CD4-positive, alpha-beta T cell (primary cell): ENCODE measurements at regions of chr3 and their contacts with region 1.

Region 1: GRCh38 chr3:18988614-18989229 is 159.6 kb upstream of the KCNH8 start:
- DNase-seq: peak in 3 of 14 experiments; percentile 35 to 63 (median 60)
- ATAC-seq: peak; percentile 67
- H3K4me3 ChIP-seq: no peak overlapping the region
- H3K4me3 Mint-ChIP-seq: peak overlapping the region; percentile 76
- H3K27ac ChIP-seq: no peak overlapping the region
- H3K27ac Mint-ChIP-seq: peak overlapping the region; percentile 77
- H3K4me1 ChIP-seq: no peaks in the 10 kb centered on the region
- H3K4me1 Mint-ChIP-seq: peaks cover 27% of the 10 kb centered on the region
- H3K27me3 ChIP-seq: peaks cover 3 to 21% of the 10 kb centered on the region in 2 experiments
- H3K27me3 Mint-ChIP-seq: peaks cover 23% of the 10 kb centered on the region
- CTCF ChIP-seq: peak; percentile 84

Region 2: GRCh38 chr3:17431004-17431403 is 1557.7 kb before region 1 on chr3:
- CTCF ChIA-PET with region 1: no interaction called
- POLR2A ChIA-PET with region 1: no interaction called
- intact Hi-C with region 1: loop called in 1 of 2 experiments (anchors 5 kb)
- DNase-seq: peak in 2 of 14 experiments; percentile 11 to 12
- ATAC-seq: no peak
- H3K4me3 ChIP-seq: no peak overlapping the region
- H3K4me3 Mint-ChIP-seq: no peak overlapping the region
- H3K27ac ChIP-seq: no peak overlapping the region
- H3K27ac Mint-ChIP-seq: no peak overlapping the region
- H3K4me1 ChIP-seq: no peaks in the 10 kb centered on the region
- H3K4me1 Mint-ChIP-seq: no peaks in the 10 kb centered on the region
- H3K27me3 ChIP-seq: no peaks in the 10 kb centered on the region
- H3K27me3 Mint-ChIP-seq: no peaks in the 10 kb centered on the region
- CTCF ChIP-seq: peak; percentile 21

Region 3: GRCh38 chr3:17841190-17841828 is 1147.4 kb before region 1 on chr3:
- CTCF ChIA-PET with region 1: interaction called, 4 read pairs
- POLR2A ChIA-PET with region 1: interaction called, 3 read pairs
- intact Hi-C with region 1: loop called in 1 of 2 experiments (anchors 5 kb)
- DNase-seq: peak; percentile 48 to 79 (median 65)
- ATAC-seq: peak; percentile 74
- H3K4me3 ChIP-seq: no peak overlapping the region
- H3K4me3 Mint-ChIP-seq: no peak overlapping the region
- H3K27ac ChIP-seq: no peak overlapping the region
- H3K27ac Mint-ChIP-seq: no peak overlapping the region
- H3K4me1 ChIP-seq: peaks cover 3% of the 10 kb centered on the region
- H3K4me1 Mint-ChIP-seq: no peaks in the 10 kb centered on the region
- H3K27me3 ChIP-seq: no peaks in the 10 kb centered on the region
- H3K27me3 Mint-ChIP-seq: no peaks in the 10 kb centered on the region
- CTCF ChIP-seq: peak; percentile 94

Region 4: GRCh38 chr3:18369551-18370185 is 619.1 kb before region 1 on chr3:
- CTCF ChIA-PET with region 1: no interaction called
- POLR2A ChIA-PET with region 1: no interaction called
- intact Hi-C with region 1: loop called in 1 of 2 experiments (anchors 5 kb)
- DNase-seq: no peak
- ATAC-seq: no peak
- H3K4me3 ChIP-seq: no peak overlapping the region
- H3K4me3 Mint-ChIP-seq: peak overlapping the region; percentile 63
- H3K27ac ChIP-seq: no peak overlapping the region
- H3K27ac Mint-ChIP-seq: peak overlapping the region; percentile 93
- H3K4me1 ChIP-seq: peaks cover 15% of the 10 kb centered on the region
- H3K4me1 Mint-ChIP-seq: peaks cover 96% of the 10 kb centered on the region
- H3K27me3 ChIP-seq: no peaks in the 10 kb centered on the region
- H3K27me3 Mint-ChIP-seq: no peaks in the 10 kb centered on the region
- CTCF ChIP-seq: no peak

Region 5: GRCh38 chr3:18438586-18438985 is 550.1 kb before region 1 on chr3:
- CTCF ChIA-PET with region 1: no interaction called
- POLR2A ChIA-PET with region 1: no interaction called
- intact Hi-C with region 1: loop called in 1 of 2 experiments (anchors 5 kb)
- DNase-seq: peak in 13 of 14 experiments; percentile 37 to 90 (median 62)
- ATAC-seq: peak; percentile 89
- H3K4me3 ChIP-seq: peak overlapping the region; percentile 80
- H3K4me3 Mint-ChIP-seq: peak overlapping the region; percentile 86
- H3K27ac ChIP-seq: peak overlapping the region; percentile 67 to 76
- H3K27ac Mint-ChIP-seq: peak overlapping the region; percentile 88
- H3K4me1 ChIP-seq: peaks cover 13% of the 10 kb centered on the region
- H3K4me1 Mint-ChIP-seq: peaks cover 72% of the 10 kb centered on the region
- H3K27me3 ChIP-seq: no peaks in the 10 kb centered on the region
- H3K27me3 Mint-ChIP-seq: no peaks in the 10 kb centered on the region
- CTCF ChIP-seq: no peak

Region 6: GRCh38 chr3:18630295-18630694 is 358.4 kb before region 1 on chr3:
- CTCF ChIA-PET with region 1: no interaction called
- POLR2A ChIA-PET with region 1: no interaction called
- intact Hi-C with region 1: no loop called
- DNase-seq: no peak
- ATAC-seq: no peak
- H3K4me3 ChIP-seq: no peak overlapping the region
- H3K4me3 Mint-ChIP-seq: no peak overlapping the region
- H3K27ac ChIP-seq: no peak overlapping the region
- H3K27ac Mint-ChIP-seq: no peak overlapping the region
- H3K4me1 ChIP-seq: no peaks in the 10 kb centered on the region
- H3K4me1 Mint-ChIP-seq: peaks cover 5% of the 10 kb centered on the region
- H3K27me3 ChIP-seq: no peaks in the 10 kb centered on the region
- H3K27me3 Mint-ChIP-seq: no peaks in the 10 kb centered on the region
- CTCF ChIP-seq: no peak

Region 7: DNA sequence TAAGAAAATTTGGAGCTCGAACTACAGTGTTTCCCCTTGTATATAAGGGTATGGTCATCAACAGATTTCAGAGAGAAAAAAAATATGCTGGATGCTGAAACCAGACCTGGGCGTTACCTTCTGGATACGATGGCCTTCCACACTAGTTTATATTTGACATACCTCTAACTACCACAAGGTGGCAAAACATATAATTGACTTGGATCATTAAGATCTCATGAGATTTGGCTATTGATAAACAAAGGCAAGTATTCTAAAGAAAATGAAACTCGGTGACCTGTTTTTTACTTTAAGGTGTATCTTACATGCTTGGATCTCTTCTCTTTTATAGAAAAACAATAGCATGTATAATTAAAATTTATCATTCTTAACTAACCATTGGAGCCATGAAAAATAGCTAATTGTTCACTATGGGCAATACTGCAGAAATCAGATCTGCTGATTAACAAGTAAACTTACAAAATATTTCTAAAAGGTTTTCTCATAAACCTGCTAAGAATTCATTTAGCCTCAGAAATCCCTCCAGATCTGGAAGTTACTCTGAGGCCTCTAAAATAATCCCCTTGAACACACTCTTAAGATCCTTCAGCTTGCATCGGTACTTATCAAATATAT is 141.0 kb before region 1 on chr3:
- CTCF ChIA-PET with region 1: no interaction called
- POLR2A ChIA-PET with region 1: no interaction called
- intact Hi-C with region 1: loop called (anchors 5 to 10 kb)
- DNase-seq: peak in 3 of 14 experiments; percentile 7 to 20 (median 13)
- ATAC-seq: no peak
- H3K4me3 ChIP-seq: no peak overlapping the region
- H3K4me3 Mint-ChIP-seq: no peak overlapping the region
- H3K27ac ChIP-seq: no peak overlapping the region
- H3K27ac Mint-ChIP-seq: no peak overlapping the region
- H3K4me1 ChIP-seq: no peaks in the 10 kb centered on the region
- H3K4me1 Mint-ChIP-seq: peaks cover 24% of the 10 kb centered on the region
- H3K27me3 ChIP-seq: no peaks in the 10 kb centered on the region
- H3K27me3 Mint-ChIP-seq: no peaks in the 10 kb centered on the region
- CTCF ChIP-seq: no peak

Region 8: DNA sequence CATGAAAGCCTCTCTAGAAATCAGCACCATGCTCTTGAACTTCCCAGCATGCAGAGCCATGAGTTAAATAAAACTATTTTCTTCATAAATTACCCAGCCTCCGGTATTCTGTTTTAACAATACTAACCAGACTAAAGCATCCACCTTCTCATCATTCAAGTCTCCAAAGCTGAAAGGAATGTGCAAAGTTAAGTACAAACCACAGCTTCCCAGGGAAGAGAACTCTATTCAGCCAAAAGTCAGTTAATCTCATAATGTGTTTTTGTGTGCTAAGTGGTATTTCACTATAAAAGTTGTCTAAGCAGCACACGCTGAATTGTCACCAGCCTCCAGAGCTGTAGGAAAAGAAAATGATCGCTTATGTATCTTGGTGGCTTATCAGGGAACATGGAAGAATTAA is 24.1 kb after region 1 on chr3:
- CTCF ChIA-PET with region 1: no interaction called
- POLR2A ChIA-PET with region 1: no interaction called
- intact Hi-C with region 1: no loop called
- DNase-seq: no peak
- ATAC-seq: no peak
- H3K4me3 ChIP-seq: no peak overlapping the region
- H3K4me3 Mint-ChIP-seq: no peak overlapping the region
- H3K27ac ChIP-seq: no peak overlapping the region
- H3K27ac Mint-ChIP-seq: no peak overlapping the region
- H3K4me1 ChIP-seq: no peaks in the 10 kb centered on the region
- H3K4me1 Mint-ChIP-seq: no peaks in the 10 kb centered on the region
- H3K27me3 ChIP-seq: no peaks in the 10 kb centered on the region
- H3K27me3 Mint-ChIP-seq: no peaks in the 10 kb centered on the region
- CTCF ChIP-seq: no peak